Naive thymus-derived CD4-positive, alpha-beta T cell (primary cell): ENCODE measurements at regions of chr13 and their contacts with region 1.

Region 1: GRCh38 chr13:76822698-76823267 is 63.4 kb downstream of the KCTD12 start:
- DNase-seq: peak in 6 of 9 donors; percentile 5 to 36 (median 22)
- ATAC-seq: peak; percentile 52
- H3K4me3 ChIP-seq: no peak overlapping the region
- H3K4me3 Mint-ChIP-seq: no peak overlapping the region
- H3K27ac ChIP-seq: no peak overlapping the region
- H3K27ac Mint-ChIP-seq: no peak overlapping the region
- H3K4me1 ChIP-seq: no peaks in the 10 kb centered on the region
- H3K4me1 Mint-ChIP-seq: peaks cover 0 to 3% (median 0%) of the 10 kb centered on the region in 7 donors
- H3K27me3 ChIP-seq: no peaks in the 10 kb centered on the region
- H3K27me3 Mint-ChIP-seq: peaks cover 0 to 7% (median 0%) of the 10 kb centered on the region in 5 donors

Region 2: DNA sequence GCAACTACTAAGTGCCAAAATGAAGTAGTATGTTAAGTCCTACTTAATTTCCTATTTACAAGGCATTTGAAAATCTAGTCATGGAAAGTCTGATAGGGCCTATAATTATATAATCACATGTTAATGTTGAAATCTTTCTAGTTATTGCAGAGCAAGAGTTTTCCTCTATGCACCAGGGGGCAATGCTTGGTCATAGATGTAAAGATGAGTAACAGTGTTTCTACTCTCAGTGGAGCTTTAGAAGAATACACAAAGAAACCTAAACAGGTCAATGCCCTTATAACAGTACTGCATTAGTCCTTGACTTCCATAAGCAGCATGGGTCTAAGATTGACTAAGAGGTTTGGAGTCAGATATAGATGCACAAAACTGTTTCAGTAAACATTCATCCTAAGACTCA is 155.2 kb before region 1 on chr13:
- CTCF ChIA-PET with region 1: interaction called, 8 read pairs
- POLR2A ChIA-PET with region 1: no interaction called
- intact Hi-C with region 1: loop called in 1 of 2 experiments (anchors 1 kb)
- DNase-seq: peak in 6 of 9 donors; percentile 11 to 38 (median 20)
- ATAC-seq: peak; percentile 63
- H3K4me3 ChIP-seq: no peak overlapping the region
- H3K4me3 Mint-ChIP-seq: no peak overlapping the region
- H3K27ac ChIP-seq: no peak overlapping the region
- H3K27ac Mint-ChIP-seq: no peak overlapping the region
- H3K4me1 ChIP-seq: no peaks in the 10 kb centered on the region
- H3K4me1 Mint-ChIP-seq: no peaks in the 10 kb centered on the region
- H3K27me3 ChIP-seq: no peaks in the 10 kb centered on the region
- H3K27me3 Mint-ChIP-seq: peaks cover 0 to 10% (median 0%) of the 10 kb centered on the region in 5 donors

Region 3: DNA sequence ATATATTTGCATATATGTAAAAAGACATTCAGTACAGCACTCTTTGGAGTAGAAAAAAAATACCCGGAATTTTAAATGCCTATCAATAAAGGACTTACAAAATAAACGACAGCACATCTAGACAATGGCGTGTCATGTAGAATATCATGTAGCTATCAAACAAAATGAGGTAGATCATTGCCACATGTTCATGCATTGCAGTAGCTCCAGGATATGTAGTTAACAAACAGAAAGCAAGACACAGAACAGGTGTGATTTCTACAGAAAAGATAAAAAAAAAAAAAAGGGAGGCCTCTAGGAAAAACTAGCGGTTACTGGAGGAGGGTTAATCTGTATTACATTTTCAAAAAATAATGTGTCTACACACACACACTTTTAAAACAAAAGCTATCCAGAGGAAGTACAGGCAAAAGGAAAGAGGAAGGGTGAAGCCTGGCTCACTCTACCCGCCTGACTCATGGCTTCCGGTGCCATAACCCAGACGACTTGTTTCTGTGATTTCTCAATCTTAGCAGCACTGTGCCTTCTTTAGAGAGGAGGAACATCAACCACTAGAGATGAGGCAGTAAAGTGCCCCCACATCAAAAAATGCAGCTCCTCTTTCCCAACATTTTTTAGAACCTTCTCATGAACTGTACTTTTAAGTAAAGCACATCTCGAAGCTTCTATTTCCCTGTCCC is 56.6 kb after region 1 on chr13:
- CTCF ChIA-PET with region 1: interaction called, 10 read pairs
- POLR2A ChIA-PET with region 1: interaction called, 14 read pairs
- intact Hi-C with region 1: no loop called
- DNase-seq: peak in 8 of 9 donors; percentile 46 to 66 (median 56)
- ATAC-seq: peak; percentile 94
- H3K4me3 ChIP-seq: peak overlapping the region; percentile 3
- H3K4me3 Mint-ChIP-seq: peak overlapping the region; percentile 56 to 87 (median 69)
- H3K27ac ChIP-seq: peak overlapping the region; percentile 31
- H3K27ac Mint-ChIP-seq: peak overlapping the region; percentile 52 to 93 (median 78)
- H3K4me1 ChIP-seq: peaks cover 0 to 21% of the 10 kb centered on the region in 2 donors
- H3K4me1 Mint-ChIP-seq: peaks cover 17 to 51% (median 46%) of the 10 kb centered on the region in 7 donors
- H3K27me3 ChIP-seq: no peaks in the 10 kb centered on the region
- H3K27me3 Mint-ChIP-seq: peaks cover 0 to 15% (median 0%) of the 10 kb centered on the region in 5 donors

Region 4: DNA sequence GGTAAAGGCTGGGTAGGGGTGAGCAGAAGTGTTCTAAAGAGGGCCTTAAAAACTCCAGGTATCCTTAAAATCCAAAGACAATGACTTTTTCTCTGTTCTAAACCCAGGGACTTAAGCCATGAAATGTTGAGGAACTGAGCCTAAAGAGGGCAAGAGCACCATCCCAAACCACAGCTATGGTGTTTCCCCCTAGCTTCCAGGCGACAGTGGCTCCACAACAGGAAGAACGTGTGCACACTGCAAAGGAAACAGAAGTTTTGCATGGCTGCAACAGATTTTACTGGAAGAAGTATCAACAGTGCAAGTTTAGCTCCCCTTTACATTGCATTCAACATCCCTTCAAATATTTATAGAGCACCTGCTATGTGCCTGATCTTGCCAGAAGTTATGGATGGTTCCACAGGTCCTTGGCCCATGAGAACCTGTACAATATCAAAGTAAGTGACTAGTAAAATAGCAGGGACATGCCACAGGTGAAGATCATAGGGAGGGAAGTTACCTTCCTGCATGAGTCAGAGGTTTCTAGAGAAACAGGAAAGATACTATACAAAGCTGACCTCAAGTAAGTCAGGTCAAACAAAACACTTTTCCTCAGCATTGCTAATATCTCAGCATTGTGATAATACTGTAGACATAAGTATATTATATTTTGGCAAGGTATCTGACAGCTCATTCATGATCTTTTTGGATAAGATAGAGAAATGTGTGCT is 71.8 kb after region 1 on chr13:
- CTCF ChIA-PET with region 1: interaction called, 15 read pairs
- POLR2A ChIA-PET with region 1: no interaction called
- intact Hi-C with region 1: loop called in 1 of 2 experiments (anchors 5 kb)
- DNase-seq: no peak
- ATAC-seq: no peak
- H3K4me3 ChIP-seq: no peak overlapping the region
- H3K4me3 Mint-ChIP-seq: peak overlapping the region in 1 of 10 donors; percentile 1
- H3K27ac ChIP-seq: no peak overlapping the region
- H3K27ac Mint-ChIP-seq: no peak overlapping the region
- H3K4me1 ChIP-seq: no peaks in the 10 kb centered on the region
- H3K4me1 Mint-ChIP-seq: peaks cover 8 to 13% (median 11%) of the 10 kb centered on the region in 7 donors
- H3K27me3 ChIP-seq: no peaks in the 10 kb centered on the region
- H3K27me3 Mint-ChIP-seq: peaks cover 0 to 42% (median 4%) of the 10 kb centered on the region in 5 donors